CD8-positive, alpha-beta T cell (primary cell): ENCODE measurements at regions of chr12 and their contacts with region 1.

Region 1: GRCh38 chr12:25320123-25321006 is 69.6 kb upstream of the KRAS start:
- DNase-seq: peak in 2 of 9 experiments; percentile 5 to 13
- ATAC-seq: no peak
- H3K4me3 ChIP-seq: no peak overlapping the region
- H3K4me3 Mint-ChIP-seq: no peak overlapping the region
- H3K27ac ChIP-seq: no peak overlapping the region
- H3K27ac Mint-ChIP-seq: no peak overlapping the region
- H3K4me1 ChIP-seq: peaks cover 37% of the 10 kb centered on the region
- H3K4me1 Mint-ChIP-seq: peaks cover 46% of the 10 kb centered on the region
- H3K27me3 ChIP-seq: no peaks in the 10 kb centered on the region
- H3K27me3 Mint-ChIP-seq: no peaks in the 10 kb centered on the region
- CTCF ChIP-seq: no peak

Region 2: GRCh38 chr12:24909667-24910066 is 410.7 kb before region 1 on chr12:
- CTCF ChIA-PET with region 1: no interaction called
- POLR2A ChIA-PET with region 1: no interaction called
- intact Hi-C with region 1: no loop called
- DNase-seq: peak in 1 of 9 experiments; percentile 26
- ATAC-seq: no peak
- H3K4me3 ChIP-seq: no peak overlapping the region
- H3K4me3 Mint-ChIP-seq: no peak overlapping the region
- H3K27ac ChIP-seq: no peak overlapping the region
- H3K27ac Mint-ChIP-seq: no peak overlapping the region
- H3K4me1 ChIP-seq: no peaks in the 10 kb centered on the region
- H3K4me1 Mint-ChIP-seq: no peaks in the 10 kb centered on the region
- H3K27me3 ChIP-seq: no peaks in the 10 kb centered on the region
- H3K27me3 Mint-ChIP-seq: no peaks in the 10 kb centered on the region
- CTCF ChIP-seq: no peak

Region 3: GRCh38 chr12:25250744-25251730 is 69.3 kb before region 1 on chr12 and contains the start of gene KRAS:
- CTCF ChIA-PET with region 1: no interaction called
- POLR2A ChIA-PET with region 1: interaction called, 3 read pairs
- intact Hi-C with region 1: loop called (anchors 2 to 5 kb)
- DNase-seq: peak; percentile 84 to 98 (median 91)
- ATAC-seq: peak; percentile 90
- H3K4me3 ChIP-seq: peak within 1 kb of the TSS; percentile 70 to 79
- H3K4me3 Mint-ChIP-seq: peak within 1 kb of the TSS; percentile 93
- H3K27ac ChIP-seq: peak within 1 kb of the TSS; percentile 67 to 75
- H3K27ac Mint-ChIP-seq: peak within 1 kb of the TSS; percentile 95
- H3K4me1 ChIP-seq: peaks cover 11% of the 10 kb centered on the region
- H3K4me1 Mint-ChIP-seq: peaks cover 38% of the 10 kb centered on the region
- H3K27me3 ChIP-seq: no peaks in the 10 kb centered on the region
- H3K27me3 Mint-ChIP-seq: no peaks in the 10 kb centered on the region
- CTCF ChIP-seq: no peak
- total RNA-seq, gene KRAS: 47.1 to 49.3 TPM

Region 4: DNA sequence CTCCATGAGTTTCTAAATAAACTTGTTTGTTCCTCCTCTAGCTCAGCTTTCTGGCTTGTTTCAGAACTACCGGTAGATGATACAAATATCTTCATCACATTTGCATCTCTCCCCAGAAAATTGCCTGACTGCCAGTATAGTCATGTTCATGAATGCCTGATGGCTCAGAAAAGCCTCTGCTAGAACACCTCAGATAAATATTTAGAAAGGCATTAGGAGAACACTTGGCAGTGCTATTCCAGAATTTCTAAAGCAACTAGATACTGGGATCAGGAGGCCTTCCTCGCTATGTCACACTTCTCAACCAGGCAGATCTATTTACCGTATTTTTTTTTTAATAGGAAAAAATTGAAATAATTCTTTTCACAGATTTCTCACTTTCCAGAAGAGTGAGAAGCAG is 37.4 kb before region 1 on chr12:
- CTCF ChIA-PET with region 1: no interaction called
- POLR2A ChIA-PET with region 1: no interaction called
- intact Hi-C with region 1: loop called in 1 of 2 experiments (anchors 5 kb)
- DNase-seq: no peak
- ATAC-seq: no peak
- H3K4me3 ChIP-seq: no peak overlapping the region
- H3K4me3 Mint-ChIP-seq: peak overlapping the region; percentile 23
- H3K27ac ChIP-seq: no peak overlapping the region
- H3K27ac Mint-ChIP-seq: peak overlapping the region; percentile 70
- H3K4me1 ChIP-seq: peaks cover 40% of the 10 kb centered on the region
- H3K4me1 Mint-ChIP-seq: peaks cover 50% of the 10 kb centered on the region
- H3K27me3 ChIP-seq: no peaks in the 10 kb centered on the region
- H3K27me3 Mint-ChIP-seq: no peaks in the 10 kb centered on the region
- CTCF ChIP-seq: no peak

Region 5: GRCh38 chr12:25332143-25332542 is 11.8 kb after region 1 on chr12:
- CTCF ChIA-PET with region 1: interaction called, 7 read pairs
- POLR2A ChIA-PET with region 1: interaction called, 11 read pairs
- intact Hi-C with region 1: loop called in 1 of 2 experiments (anchors 2 kb)
- DNase-seq: no peak
- ATAC-seq: no peak
- H3K4me3 ChIP-seq: no peak overlapping the region
- H3K4me3 Mint-ChIP-seq: no peak overlapping the region
- H3K27ac ChIP-seq: no peak overlapping the region
- H3K27ac Mint-ChIP-seq: no peak overlapping the region
- H3K4me1 ChIP-seq: no peaks in the 10 kb centered on the region
- H3K4me1 Mint-ChIP-seq: peaks cover 12% of the 10 kb centered on the region
- H3K27me3 ChIP-seq: no peaks in the 10 kb centered on the region
- H3K27me3 Mint-ChIP-seq: no peaks in the 10 kb centered on the region
- CTCF ChIP-seq: no peak

Region 6: DNA sequence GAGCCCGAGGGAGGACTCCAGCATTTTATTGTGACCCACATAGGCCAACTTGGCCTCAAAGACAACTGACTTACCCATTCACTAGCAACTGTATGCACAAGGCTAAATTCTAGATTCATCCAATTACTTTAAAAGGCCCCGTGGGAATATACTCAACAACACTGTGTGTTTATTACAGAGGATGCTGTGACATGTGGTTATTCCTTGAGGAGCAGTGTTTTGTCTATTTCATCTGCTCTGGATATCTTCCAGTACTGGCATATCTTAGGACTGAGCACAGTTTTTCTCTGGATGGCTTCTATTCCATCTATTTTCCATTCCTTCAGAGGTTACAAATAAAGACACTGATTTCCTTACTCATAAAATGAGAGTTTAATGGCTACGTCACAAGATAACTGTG is 17.6 kb after region 1 on chr12:
- CTCF ChIA-PET with region 1: interaction called, 7 read pairs
- POLR2A ChIA-PET with region 1: interaction called, 11 read pairs
- intact Hi-C with region 1: loop called in 1 of 2 experiments (anchors 2 kb)
- DNase-seq: no peak
- ATAC-seq: no peak
- H3K4me3 ChIP-seq: no peak overlapping the region
- H3K4me3 Mint-ChIP-seq: no peak overlapping the region
- H3K27ac ChIP-seq: no peak overlapping the region
- H3K27ac Mint-ChIP-seq: no peak overlapping the region
- H3K4me1 ChIP-seq: no peaks in the 10 kb centered on the region
- H3K4me1 Mint-ChIP-seq: peaks cover 4% of the 10 kb centered on the region
- H3K27me3 ChIP-seq: no peaks in the 10 kb centered on the region
- H3K27me3 Mint-ChIP-seq: no peaks in the 10 kb centered on the region
- CTCF ChIP-seq: no peak